Endothelial cell of umbilical vein (primary cell): ENCODE measurements at regions of chr10 and their contacts with region 1.

Region 1: DNA sequence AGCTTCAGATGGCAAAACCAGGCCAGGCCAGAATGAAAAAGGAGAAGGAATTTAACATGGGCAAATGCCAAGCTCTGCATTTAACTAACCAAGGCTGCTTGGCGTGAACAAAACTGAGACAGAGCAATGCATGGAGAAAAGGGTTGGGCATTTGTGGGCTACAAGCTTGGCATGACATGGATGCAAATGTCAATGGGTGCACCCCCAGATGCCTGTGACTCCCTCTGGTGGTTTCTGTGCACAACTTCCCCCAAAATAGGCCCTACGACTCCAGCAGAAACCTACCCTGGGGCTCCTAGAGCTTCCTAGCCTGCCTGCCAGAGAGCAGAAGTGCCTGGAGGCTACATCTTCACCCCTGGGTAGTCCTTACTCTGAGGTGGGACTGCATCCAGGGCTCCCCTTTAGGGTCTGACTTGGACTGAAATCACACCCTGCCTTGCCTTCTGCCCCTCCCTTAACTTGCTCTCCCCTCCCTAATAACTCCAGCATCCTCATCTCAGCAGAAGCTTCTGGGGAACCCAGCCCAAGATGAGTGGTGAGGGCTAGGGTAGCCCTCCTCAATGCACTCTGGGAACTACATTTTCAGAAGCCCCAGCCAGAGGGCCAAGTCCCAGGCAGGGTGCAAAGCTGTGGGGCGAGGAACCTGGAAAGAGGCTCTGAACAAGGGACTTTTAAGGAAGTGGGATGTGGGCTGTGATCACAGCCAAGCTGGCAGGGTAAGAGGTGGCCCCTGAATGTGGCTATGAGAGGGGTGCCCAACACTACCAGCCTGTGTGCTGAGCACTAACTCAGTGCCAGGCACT is 11.3 kb downstream of the GPRIN2 start:
- DNase-seq: no peak
- H3K4me3 ChIP-seq: no peak overlapping the region
- H3K27ac ChIP-seq: no peak overlapping the region
- H3K4me1 ChIP-seq: no peaks in the 10 kb centered on the region
- H3K27me3 ChIP-seq: no peaks in the 10 kb centered on the region
- CTCF ChIP-seq: peak; percentile 5 to 30
- POLR2A ChIP-seq: no peak

Region 2: DNA sequence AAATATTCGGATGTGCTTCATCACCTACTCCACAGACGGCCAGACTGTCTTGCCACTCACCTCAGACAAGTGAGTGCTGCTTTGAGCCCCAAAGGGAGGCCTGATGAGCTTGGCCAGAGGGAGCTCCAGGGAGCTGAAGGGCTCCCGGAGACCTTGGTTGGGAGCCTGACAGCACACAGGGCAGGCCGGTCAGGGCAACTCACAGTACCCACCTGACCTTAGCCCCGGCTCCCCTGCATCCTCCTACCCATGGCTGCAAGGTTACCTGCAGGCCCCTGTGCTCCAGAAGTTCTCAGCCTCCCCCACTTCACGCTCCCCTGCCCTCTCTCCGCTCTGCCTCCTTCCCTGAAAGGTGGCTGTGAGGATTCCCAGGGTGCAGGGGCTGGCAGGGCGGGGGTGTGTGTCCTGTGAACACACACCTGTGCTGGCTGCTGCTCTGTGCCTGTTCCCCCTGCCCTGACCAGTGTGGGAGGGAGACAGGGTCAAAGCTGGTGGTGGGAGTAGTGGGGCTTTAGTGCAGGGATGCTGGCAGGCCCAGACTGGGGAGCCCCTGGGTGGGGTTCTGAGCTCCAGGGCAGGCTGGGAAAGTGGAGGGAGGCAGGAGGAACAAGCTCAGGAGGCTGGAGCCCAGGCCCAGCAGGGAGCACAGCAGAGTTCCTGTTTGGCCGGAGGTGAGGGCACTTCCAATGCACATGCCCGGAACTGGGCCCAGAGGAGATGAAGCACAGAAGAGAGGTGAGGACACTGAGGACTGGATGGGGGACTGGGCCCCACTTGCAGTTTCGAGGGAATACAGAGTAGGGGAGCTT is 251.2 kb before region 1 on chr10:
- CTCF ChIA-PET with region 1: no interaction called
- POLR2A ChIA-PET with region 1: no interaction called
- dilution Hi-C with region 1: no loop called
- intact Hi-C with region 1: no loop called
- DNase-seq: no peak
- H3K4me3 ChIP-seq: no peak overlapping the region
- H3K27ac ChIP-seq: no peak overlapping the region
- H3K4me1 ChIP-seq: no peaks in the 10 kb centered on the region
- H3K27me3 ChIP-seq: no peaks in the 10 kb centered on the region
- CTCF ChIP-seq: no peak
- POLR2A ChIP-seq: no peak

Region 3: DNA sequence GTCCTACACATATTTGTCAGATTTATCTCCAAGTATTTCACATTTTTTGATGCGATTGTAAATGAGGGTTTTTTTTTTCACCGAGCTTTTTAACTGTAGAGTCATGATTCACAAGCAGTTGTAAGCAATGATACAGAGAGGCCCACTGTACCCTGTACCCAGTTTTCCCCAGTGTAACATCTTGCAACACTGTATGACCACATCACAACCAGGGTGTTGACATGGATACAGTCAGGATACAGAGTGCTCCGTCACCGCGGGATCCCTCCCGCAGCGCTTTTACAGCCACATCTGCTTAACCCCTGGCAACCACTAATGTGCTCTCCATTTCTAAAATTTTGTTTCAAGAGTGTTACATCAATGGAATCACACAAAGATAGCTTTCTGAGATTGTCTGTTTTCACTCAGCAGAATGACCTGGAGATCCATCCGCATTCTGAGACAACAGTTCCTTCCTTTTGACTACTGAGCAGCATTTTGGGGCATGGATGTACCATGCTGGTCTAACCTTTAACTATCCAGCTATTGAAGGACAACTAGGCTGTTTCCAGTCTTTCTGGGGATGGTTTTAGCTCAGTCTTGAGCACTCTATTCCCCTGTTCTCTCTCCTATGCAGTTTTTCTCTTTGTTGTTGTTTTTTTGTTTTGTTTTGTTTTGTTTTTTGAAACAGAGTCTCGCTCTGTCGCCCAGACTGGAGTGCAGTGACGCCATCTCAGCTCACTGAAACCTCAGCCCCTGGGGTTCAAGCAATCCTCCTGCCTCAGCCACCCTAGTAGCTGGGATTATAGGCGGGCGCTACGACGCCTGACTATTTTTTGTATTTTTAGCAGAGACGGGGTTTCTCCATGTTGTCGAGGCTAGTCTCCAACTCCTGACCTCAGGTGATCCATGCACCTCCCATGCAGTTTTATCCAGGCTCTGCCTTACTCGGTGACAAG is 14.7 kb before region 1 on chr10:
- CTCF ChIA-PET with region 1: interaction called, 7 read pairs
- POLR2A ChIA-PET with region 1: no interaction called
- dilution Hi-C with region 1: no loop called
- intact Hi-C with region 1: loop called (anchors 2 kb)
- DNase-seq: no peak
- H3K4me3 ChIP-seq: no peak overlapping the region
- H3K27ac ChIP-seq: no peak overlapping the region
- H3K4me1 ChIP-seq: no peaks in the 10 kb centered on the region
- H3K27me3 ChIP-seq: peaks cover 2 to 4% of the 10 kb centered on the region in 2 experiments
- CTCF ChIP-seq: no peak
- POLR2A ChIP-seq: no peak

Region 4: DNA sequence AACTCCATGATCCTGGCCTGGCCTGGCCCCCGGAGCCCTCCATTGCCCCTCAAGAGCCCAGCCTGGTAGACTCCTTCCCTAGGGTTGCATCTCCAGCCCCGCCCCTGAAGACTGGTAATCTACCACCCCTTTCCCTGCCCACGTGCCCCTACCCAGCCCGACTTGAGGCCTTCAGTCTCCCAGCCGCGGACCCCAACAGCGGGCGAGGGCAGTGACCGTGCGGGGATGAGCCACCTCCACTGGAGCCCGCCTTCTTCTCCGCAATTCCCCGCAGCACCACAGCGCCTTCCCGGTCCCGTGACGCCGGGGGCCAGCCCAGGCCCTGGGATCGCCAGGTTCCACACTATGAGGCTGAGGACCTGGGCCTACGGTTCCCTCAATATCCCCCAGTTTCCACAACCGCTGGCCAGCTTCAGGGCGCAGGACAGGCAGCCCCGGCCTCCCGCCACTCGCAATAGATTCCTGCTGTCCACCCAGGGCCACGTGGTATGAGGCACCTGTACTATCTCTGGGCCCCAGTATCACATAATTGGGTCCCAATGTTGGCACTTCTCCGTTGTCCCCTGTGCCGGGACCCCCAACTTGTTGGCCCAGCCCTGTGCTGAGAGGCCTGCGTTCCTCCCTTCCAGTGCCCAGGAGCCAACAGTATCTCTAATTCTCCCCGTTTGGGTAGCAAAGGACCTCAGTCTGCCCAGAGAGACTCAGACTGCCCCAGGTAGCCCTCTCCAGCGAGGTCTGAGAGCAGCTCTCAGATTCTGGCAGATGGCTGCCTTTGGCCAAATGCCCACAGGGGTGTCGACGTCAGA is 12.3 kb after region 1 on chr10:
- CTCF ChIA-PET with region 1: interaction called, 14 read pairs
- POLR2A ChIA-PET with region 1: no interaction called
- dilution Hi-C with region 1: no loop called
- intact Hi-C with region 1: loop called (anchors 1 kb)
- DNase-seq: no peak
- H3K4me3 ChIP-seq: no peak overlapping the region
- H3K27ac ChIP-seq: no peak overlapping the region
- H3K4me1 ChIP-seq: no peaks in the 10 kb centered on the region
- H3K27me3 ChIP-seq: peaks cover 22 to 35% of the 10 kb centered on the region in 2 experiments
- CTCF ChIP-seq: no peak
- POLR2A ChIP-seq: no peak